ENCODE measurements at regions of chr10 and their contacts with region 1.

Region 1: GRCh38 chr10:73529089-73529832 is 33.4 kb upstream of the PPP3CB start:
- DNase-seq: peak in 8 of 9 donors; percentile 23 to 82 (median 73)
- ATAC-seq: peak; percentile 93
- H3K4me3 ChIP-seq: no peak overlapping the region
- H3K4me3 Mint-ChIP-seq: no peak overlapping the region
- H3K27ac ChIP-seq: no peak overlapping the region
- H3K27ac Mint-ChIP-seq: no peak overlapping the region
- H3K4me1 ChIP-seq: no peaks in the 10 kb centered on the region
- H3K4me1 Mint-ChIP-seq: no peaks in the 10 kb centered on the region
- H3K27me3 ChIP-seq: no peaks in the 10 kb centered on the region
- H3K27me3 Mint-ChIP-seq: peaks cover 0 to 2% (median 0%) of the 10 kb centered on the region in 5 donors

Region 2: GRCh38 chr10:73591935-73592699 is 62.9 kb after region 1 on chr10:
- CTCF ChIA-PET with region 1: no interaction called
- POLR2A ChIA-PET with region 1: no interaction called
- intact Hi-C with region 1: loop called in 1 of 2 experiments (anchors 5 kb)
- DNase-seq: peak in 4 of 9 donors; percentile 6 to 28 (median 14)
- ATAC-seq: peak; percentile 66
- H3K4me3 ChIP-seq: no peak overlapping the region
- H3K4me3 Mint-ChIP-seq: peak overlapping the region; percentile 34 to 84 (median 70)
- H3K27ac ChIP-seq: peak overlapping the region; percentile 31
- H3K27ac Mint-ChIP-seq: peak overlapping the region; percentile 58 to 84 (median 78)
- H3K4me1 ChIP-seq: peaks cover 0 to 17% of the 10 kb centered on the region in 2 donors
- H3K4me1 Mint-ChIP-seq: peaks cover 12 to 32% (median 27%) of the 10 kb centered on the region in 7 donors
- H3K27me3 ChIP-seq: no peaks in the 10 kb centered on the region
- H3K27me3 Mint-ChIP-seq: no peaks in the 10 kb centered on the region

Measured in naive thymus-derived CD4-positive, alpha-beta T cell (primary cell).